ENCODE measurements at regions of chr11 and their contacts with region 1.

Region 1: GRCh38 chr11:121367001-121367843 is 74.7 kb downstream of the SC5D start:
- DNase-seq: peak; percentile 95
- H3K4me3 ChIP-seq: peak overlapping the region; percentile 35
- H3K27ac ChIP-seq: peak overlapping the region; percentile 98
- H3K4me1 ChIP-seq: peaks cover 86% of the 10 kb centered on the region
- CTCF ChIP-seq: 0 out of 2 replicates have a peak, but pooled peaks have one; percentile 14

Region 2: GRCh38 chr11:121328967-121329679 is 38.1 kb before region 1 on chr11:
- CTCF ChIA-PET with region 1: interaction called, 3 read pairs
- POLR2A ChIA-PET with region 1: interaction called, 43 read pairs
- intact Hi-C with region 1: loop called (anchors 1 kb)
- DNase-seq: peak; percentile 66
- H3K4me3 ChIP-seq: peak overlapping the region; percentile 25
- H3K27ac ChIP-seq: peak overlapping the region; percentile 87
- H3K4me1 ChIP-seq: peaks cover 62% of the 10 kb centered on the region
- CTCF ChIP-seq: no peak

Region 3: GRCh38 chr11:121341609-121342008 is 25.6 kb before region 1 on chr11:
- CTCF ChIA-PET with region 1: interaction called, 4 read pairs
- POLR2A ChIA-PET with region 1: interaction called, 56 read pairs
- intact Hi-C with region 1: loop called (anchors 2 kb)
- DNase-seq: peak; percentile 60
- H3K4me3 ChIP-seq: no peak overlapping the region
- H3K27ac ChIP-seq: peak overlapping the region; percentile 28
- H3K4me1 ChIP-seq: peaks cover 64% of the 10 kb centered on the region
- CTCF ChIP-seq: no peak

Region 4: GRCh38 chr11:121383716-121384115 is 16.5 kb after region 1 on chr11:
- CTCF ChIA-PET with region 1: interaction called, 6 read pairs
- POLR2A ChIA-PET with region 1: interaction called, 51 read pairs
- intact Hi-C with region 1: no loop called
- DNase-seq: no peak
- H3K4me3 ChIP-seq: no peak overlapping the region
- H3K27ac ChIP-seq: peak overlapping the region; percentile 84
- H3K4me1 ChIP-seq: peaks cover 92% of the 10 kb centered on the region
- CTCF ChIP-seq: no peak

Region 5: DNA sequence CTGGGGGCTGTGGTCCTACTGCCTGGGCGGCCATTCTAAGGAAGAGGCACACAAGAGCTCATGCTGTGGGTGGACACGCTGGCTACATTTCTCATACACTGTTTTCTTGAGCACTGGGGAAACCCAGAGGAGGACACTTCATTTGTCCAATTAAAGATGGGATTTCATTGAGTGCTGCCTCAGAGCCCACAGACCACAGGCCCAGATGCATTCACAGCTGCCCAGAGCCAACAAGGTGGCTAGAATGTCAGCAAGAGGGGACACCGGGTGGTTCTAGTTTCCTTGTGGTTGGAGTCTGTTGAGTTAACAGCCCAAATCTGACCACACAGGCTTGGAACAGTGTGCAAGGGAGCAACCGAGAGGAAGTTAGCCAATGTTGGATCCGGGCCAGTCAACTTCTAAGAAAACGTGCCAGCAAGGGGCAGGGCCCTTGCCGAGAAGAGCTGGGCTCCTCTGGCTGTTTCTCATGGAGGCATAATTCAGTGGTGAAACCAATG is 49.9 kb after region 1 on chr11:
- CTCF ChIA-PET with region 1: interaction called, 3 read pairs
- POLR2A ChIA-PET with region 1: interaction called, 14 read pairs
- intact Hi-C with region 1: loop called (anchors 5 kb)
- DNase-seq: peak; percentile 41
- H3K4me3 ChIP-seq: no peak overlapping the region
- H3K27ac ChIP-seq: peak overlapping the region; percentile 91
- H3K4me1 ChIP-seq: peaks cover 79% of the 10 kb centered on the region
- CTCF ChIP-seq: no peak